Activated CD4-positive, alpha-beta T cell treated with anti-CD3 and anti-CD28 coated beads for 36 hours (primary cell): ENCODE measurements at regions of chr4 and their contacts with region 1.

Region 1: DNA sequence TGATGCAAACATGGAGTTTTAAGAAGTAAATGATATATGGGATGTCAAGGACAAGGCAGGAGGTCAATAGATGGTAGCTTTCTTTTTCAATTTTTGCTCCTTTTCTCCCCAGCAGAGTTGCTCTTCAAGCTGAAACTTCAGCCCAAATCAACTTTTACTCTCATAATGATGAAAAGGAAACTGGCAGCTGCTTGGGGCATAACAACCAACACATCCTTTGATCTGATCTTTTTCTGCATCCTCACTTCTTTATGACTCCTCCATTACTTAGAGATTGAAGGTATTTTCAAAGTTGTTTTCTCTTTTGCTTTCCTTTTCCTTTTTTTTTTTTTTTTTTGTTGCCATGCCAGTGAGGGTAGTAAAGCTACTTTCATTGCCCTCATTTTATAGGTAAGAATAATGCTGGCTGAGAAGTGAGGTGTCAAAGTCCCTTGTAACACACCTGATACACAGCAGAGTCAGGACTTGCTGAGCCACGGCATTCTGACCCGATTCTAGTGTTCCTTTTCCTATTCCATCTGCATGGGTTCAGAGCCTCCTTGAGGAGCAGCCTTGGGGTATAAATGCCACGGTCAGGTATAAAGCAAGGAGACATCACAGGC is 26.9 kb downstream of the SLC2A9 start:
- DNase-seq: no peak
- ATAC-seq: peak; percentile 90
- H3K4me3 Mint-ChIP-seq: no peak overlapping the region
- H3K27ac Mint-ChIP-seq: peak overlapping the region; percentile 52
- H3K4me1 Mint-ChIP-seq: peaks cover 22% of the 10 kb centered on the region
- H3K27me3 Mint-ChIP-seq: no peaks in the 10 kb centered on the region

Region 2: DNA sequence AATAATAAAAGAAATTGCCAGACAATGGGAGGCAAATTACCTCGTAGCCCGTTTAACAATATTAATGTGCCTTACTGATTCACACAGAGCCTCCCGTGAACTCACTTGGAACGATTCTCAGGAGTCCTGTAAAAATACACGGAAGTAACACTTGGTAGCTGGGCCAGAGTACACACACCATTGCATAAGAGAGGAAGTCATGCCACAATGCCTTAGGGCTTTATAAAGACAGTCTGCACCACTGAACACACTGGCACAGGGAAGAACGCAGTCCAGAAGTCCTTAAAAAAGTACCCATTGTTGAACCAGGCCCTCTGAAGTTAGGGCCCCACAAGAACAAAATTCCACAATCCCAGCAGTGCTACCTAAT is 11.9 kb after region 1 on chr4:
- CTCF ChIA-PET with region 1: interaction called, 4 read pairs
- POLR2A ChIA-PET with region 1: no interaction called
- intact Hi-C with region 1: loop called in 1 of 2 experiments (anchors 1 kb)
- DNase-seq: no peak
- ATAC-seq: no peak
- H3K4me3 Mint-ChIP-seq: no peak overlapping the region
- H3K27ac Mint-ChIP-seq: peak overlapping the region; percentile 48
- H3K4me1 Mint-ChIP-seq: peaks cover 23% of the 10 kb centered on the region
- H3K27me3 Mint-ChIP-seq: no peaks in the 10 kb centered on the region

Region 3: DNA sequence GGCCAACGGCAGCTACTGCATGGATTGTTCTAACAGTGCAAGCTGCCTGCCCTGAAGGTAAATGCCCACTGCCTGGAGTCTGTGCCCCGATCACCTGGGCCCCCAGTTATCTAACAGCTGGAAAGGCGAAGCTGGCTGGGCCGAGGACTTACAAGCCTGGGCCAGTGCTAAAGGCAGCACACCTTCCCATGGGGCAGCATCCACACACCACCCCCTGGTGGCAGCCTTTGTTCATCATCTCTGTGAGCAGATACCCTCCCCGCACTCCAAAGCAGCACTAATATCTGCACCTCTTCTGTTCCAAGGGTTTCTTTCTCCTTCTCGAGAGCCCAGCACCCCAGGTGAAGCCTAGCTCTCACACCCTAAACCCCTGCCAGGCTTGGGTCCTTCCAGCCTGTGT is 19.4 kb after region 1 on chr4:
- CTCF ChIA-PET with region 1: interaction called, 11 read pairs
- POLR2A ChIA-PET with region 1: no interaction called
- intact Hi-C with region 1: no loop called
- DNase-seq: peak; percentile 78
- ATAC-seq: peak; percentile 53
- H3K4me3 Mint-ChIP-seq: no peak overlapping the region
- H3K27ac Mint-ChIP-seq: no peak overlapping the region
- H3K4me1 Mint-ChIP-seq: no peaks in the 10 kb centered on the region
- H3K27me3 Mint-ChIP-seq: no peaks in the 10 kb centered on the region